ENCODE measurements at regions of chrX and their contacts with region 1.

Region 1: DNA sequence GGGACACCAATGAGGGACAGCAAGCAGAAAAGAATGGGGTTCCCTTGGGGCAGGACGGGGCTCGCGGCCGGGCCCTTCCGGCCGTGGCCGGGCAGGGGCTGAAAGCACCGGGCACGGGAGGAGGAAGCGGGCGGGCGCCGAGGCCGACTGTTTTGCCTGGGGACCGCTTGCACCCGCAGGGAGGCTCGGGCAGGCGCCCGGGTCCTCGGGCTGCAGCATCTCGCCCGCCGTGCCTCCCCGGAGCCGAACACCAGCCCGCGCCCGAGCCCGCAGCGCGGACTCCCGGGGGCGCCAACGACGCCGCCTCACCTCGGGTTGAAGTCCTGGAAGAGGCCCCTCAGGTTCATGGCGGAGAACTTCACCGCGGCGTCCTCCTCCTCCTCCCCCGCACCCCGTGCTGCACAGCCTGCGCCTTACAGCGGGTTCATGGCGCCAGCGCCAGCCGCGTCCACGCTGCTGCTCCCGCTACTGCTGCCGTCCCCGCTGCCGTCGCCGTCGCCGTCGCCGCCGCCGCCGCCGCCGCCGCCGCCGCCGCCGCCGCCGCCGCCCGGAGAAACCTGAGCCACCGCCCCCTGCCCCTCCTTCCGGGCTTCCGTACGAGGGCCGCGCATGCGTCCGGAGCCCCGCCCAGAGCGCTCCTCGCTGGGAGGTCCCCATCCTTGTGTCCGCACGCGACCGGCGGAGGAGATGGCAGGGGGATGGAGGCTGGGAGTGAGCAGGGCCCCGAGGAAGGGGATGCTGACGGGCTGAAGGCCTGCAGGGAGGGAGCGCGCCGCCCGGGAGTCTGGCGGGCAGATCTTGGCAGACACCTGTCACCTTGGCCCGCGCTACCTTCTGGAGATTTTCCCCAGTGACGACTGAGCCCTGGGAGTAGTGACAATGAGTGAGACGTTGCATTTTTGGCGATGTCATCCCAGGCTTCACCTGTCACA is at the start of gene TMEM185A:
- DNase-seq: peak; percentile 72 to 84
- ATAC-seq: peak; percentile 83 to 94 (median 86)
- H3K4me3 ChIP-seq: peak within 1 kb of the TSS; percentile 79
- H3K27ac ChIP-seq: peak within 1 kb of the TSS; percentile 63
- H3K4me1 ChIP-seq: peaks cover 7% of the 10 kb centered on the region
- H3K27me3 ChIP-seq: no peaks in the 10 kb centered on the region
- CTCF ChIP-seq: no peak
- total RNA-seq, gene TMEM185A: 7.2 to 13.4 (median 10.4) TPM

Region 2: DNA sequence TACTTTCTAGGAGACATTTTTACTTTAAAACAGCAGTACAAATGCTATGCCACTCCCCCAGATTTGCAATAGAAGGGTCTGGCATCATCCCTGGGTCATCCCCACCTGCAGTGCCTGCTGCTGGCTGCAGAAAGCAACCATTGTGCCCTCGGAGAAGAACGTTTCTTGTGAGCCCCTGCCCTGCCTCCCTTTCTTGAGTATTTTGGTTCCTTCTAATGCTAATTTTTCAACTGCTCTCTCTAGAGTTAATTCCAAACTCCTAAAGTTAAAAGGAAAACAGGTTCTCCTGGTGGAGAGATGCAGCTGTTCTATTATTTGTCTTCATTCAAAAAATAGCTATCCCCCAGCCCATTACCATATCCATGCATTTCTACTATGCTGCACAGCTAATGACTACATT is 233.5 kb before region 1 on chrX:
- intact Hi-C with region 1: no loop called
- DNase-seq: no peak
- ATAC-seq: no peak
- H3K4me3 ChIP-seq: no peak overlapping the region
- H3K27ac ChIP-seq: no peak overlapping the region
- H3K4me1 ChIP-seq: no peaks in the 10 kb centered on the region
- H3K27me3 ChIP-seq: no peaks in the 10 kb centered on the region
- CTCF ChIP-seq: no peak

Region 3: GRCh38 chrX:149504915-149505651 is 126.4 kb before region 1 on chrX and contains the start of gene IDS:
- intact Hi-C with region 1: loop called (anchors 10 kb)
- DNase-seq: peak; percentile 89 to 93
- ATAC-seq: peak; percentile 96 to 98 (median 98)
- H3K4me3 ChIP-seq: peak within 1 kb of the TSS; percentile 76
- H3K27ac ChIP-seq: peak within 1 kb of the TSS; percentile 87
- H3K4me1 ChIP-seq: peaks cover 3% of the 10 kb centered on the region
- H3K27me3 ChIP-seq: no peaks in the 10 kb centered on the region
- CTCF ChIP-seq: no peak
- total RNA-seq, gene IDS: 29.3 to 37.6 (median 34.1) TPM

Region 4: GRCh38 chrX:149512225-149512885 is 119.1 kb before region 1 on chrX:
- intact Hi-C with region 1: loop called (anchors 10 kb)
- DNase-seq: peak in 1 of 2 donors; percentile 25
- ATAC-seq: peak; percentile 63 to 76 (median 70)
- H3K4me3 ChIP-seq: no peak overlapping the region
- H3K27ac ChIP-seq: no peak overlapping the region
- H3K4me1 ChIP-seq: no peaks in the 10 kb centered on the region
- H3K27me3 ChIP-seq: no peaks in the 10 kb centered on the region
- CTCF ChIP-seq: peak; percentile 47

Region 5: DNA sequence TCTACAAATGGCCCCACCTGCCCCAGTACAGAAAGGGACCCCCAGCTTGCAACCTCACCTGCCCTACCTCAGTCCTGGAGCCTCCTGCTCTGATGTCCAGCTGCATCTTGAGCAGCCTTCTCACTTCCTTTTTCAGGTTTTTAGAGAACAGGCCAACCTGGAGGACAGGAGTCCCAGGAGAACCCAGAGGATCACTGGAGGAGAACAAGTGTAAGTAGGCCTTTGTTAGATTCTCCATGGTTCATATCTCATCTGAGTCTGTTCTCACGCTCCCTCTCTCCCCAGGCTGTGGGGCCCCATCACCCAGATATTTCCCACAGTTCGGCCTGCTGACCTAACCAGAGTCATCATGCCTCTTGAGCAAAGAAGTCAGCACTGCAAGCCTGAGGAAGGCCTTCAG is 84.0 kb after region 1 on chrX:
- intact Hi-C with region 1: loop called in 1 of 2 experiments (anchors 10 kb)
- DNase-seq: no peak
- ATAC-seq: no peak
- H3K4me3 ChIP-seq: no peak overlapping the region
- H3K27ac ChIP-seq: no peak overlapping the region
- H3K4me1 ChIP-seq: no peaks in the 10 kb centered on the region
- H3K27me3 ChIP-seq: peaks cover 0 to 5% (median 0%) of the 10 kb centered on the region in 3 donors
- CTCF ChIP-seq: no peak